ENCODE measurements at regions of chr6 and their contacts with region 1.

Region 1: DNA sequence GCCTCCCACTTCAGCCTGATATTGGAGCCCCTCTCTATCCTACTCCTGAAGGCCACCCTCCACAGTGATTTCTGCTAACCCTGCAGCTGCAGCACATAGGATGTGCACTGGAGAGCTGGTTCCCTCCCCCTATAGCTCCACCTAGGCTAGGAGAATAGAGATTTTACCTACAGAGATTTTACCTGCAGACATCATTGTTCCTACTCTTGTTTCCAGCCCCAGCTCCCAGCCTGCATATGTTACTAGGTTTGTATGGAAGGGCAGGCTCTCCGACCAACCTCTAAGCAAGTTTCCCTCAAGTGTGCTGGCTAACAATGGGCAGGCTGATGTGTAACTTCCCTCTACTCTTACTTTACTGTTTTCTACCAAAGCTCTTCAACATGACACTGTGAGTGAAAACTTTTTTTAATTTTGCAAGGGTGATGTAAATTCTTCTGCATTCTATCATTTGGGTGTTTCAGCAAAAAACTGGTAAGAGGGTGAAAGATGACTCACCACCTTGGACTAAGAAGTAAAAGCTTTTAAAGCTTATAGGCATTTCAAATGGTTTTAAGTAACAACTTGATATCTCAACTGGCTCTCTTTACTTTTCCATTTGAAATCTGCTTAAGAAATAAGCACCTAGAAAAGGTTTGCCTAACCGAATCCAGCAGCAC is 106.8 kb downstream of the CDK19 start:
- H3K4me3 Mint-ChIP-seq: no peak overlapping the region
- H3K27ac Mint-ChIP-seq: no peak overlapping the region
- H3K4me1 Mint-ChIP-seq: peaks cover 32% of the 10 kb centered on the region
- H3K27me3 Mint-ChIP-seq: no peaks in the 10 kb centered on the region

Region 2: DNA sequence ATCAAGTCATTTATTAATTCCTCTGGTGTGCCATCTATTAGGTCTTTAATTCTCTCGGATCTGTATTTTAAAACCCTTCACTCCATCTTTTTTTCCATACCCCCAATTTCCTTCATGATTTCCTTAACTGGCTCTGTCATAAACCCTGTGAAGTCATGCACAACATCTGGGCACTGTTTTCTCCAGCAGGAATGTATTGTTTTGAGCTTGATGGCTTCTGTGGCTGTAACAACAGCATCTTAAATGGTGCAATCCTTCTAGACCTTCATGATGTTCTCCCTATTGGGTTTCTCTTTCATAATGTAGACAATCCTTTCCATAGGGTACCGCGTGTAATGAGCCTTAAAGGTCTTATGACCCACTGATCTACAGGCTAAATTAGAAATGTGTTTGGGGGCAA is 77.8 kb after region 1 on chr6:
- intact Hi-C with region 1: loop called (anchors 5 kb)
- H3K4me3 Mint-ChIP-seq: no peak overlapping the region
- H3K27ac Mint-ChIP-seq: no peak overlapping the region
- H3K4me1 Mint-ChIP-seq: peaks cover 36% of the 10 kb centered on the region
- H3K27me3 Mint-ChIP-seq: no peaks in the 10 kb centered on the region

Region 3: GRCh38 chr6:110799189-110799588 is 90.8 kb after region 1 on chr6:
- intact Hi-C with region 1: no loop called
- H3K4me3 Mint-ChIP-seq: no peak overlapping the region
- H3K27ac Mint-ChIP-seq: peak overlapping the region; percentile 53
- H3K4me1 Mint-ChIP-seq: peaks cover 48% of the 10 kb centered on the region
- H3K27me3 Mint-ChIP-seq: no peaks in the 10 kb centered on the region